Ovary (tissue), 10 donors: ENCODE measurements at regions of chr1 and their contacts with region 1.

Region 1: GRCh38 chr1:16078925-16079656 is 5.6 kb upstream of the FAM131C start:
- DNase-seq: peak; percentile 76 to 89 (median 87)
- H3K4me3 ChIP-seq: no peak overlapping the region
- H3K27ac ChIP-seq: no peak overlapping the region
- H3K4me1 ChIP-seq: peaks cover 1% of the 10 kb centered on the region
- H3K27me3 ChIP-seq: no peaks in the 10 kb centered on the region
- CTCF ChIP-seq: peak; percentile 86 to 98 (median 97)
- EP300 ChIP-seq: no peak
- POLR2A ChIP-seq: peak; percentile 14

Region 2: GRCh38 chr1:15975805-15976680 is 103.0 kb before region 1 on chr1 and contains the start of gene ZBTB17:
- intact Hi-C with region 1: no loop called
- DNase-seq: peak; percentile 93 to 97 (median 94)
- H3K4me3 ChIP-seq: peak within 1 kb of the TSS; percentile 91
- H3K27ac ChIP-seq: peak within 1 kb of the TSS in 1 of 2 donors; percentile 80
- H3K4me1 ChIP-seq: peaks cover 5% of the 10 kb centered on the region
- H3K27me3 ChIP-seq: no peaks in the 10 kb centered on the region
- CTCF ChIP-seq: no peak
- EP300 ChIP-seq: no peak
- POLR2A ChIP-seq: peak; percentile 70
- total RNA-seq, gene ZBTB17: 18.8 to 45.7 (median 29.8) TPM

Region 3: GRCh38 chr1:16026723-16027484 is 52.2 kb before region 1 on chr1:
- intact Hi-C with region 1: no loop called
- DNase-seq: peak; percentile 64 to 75 (median 72)
- H3K4me3 ChIP-seq: peak overlapping the region; percentile 27
- H3K27ac ChIP-seq: peak overlapping the region in 1 of 2 donors; percentile 66
- H3K4me1 ChIP-seq: peaks cover 4% of the 10 kb centered on the region
- H3K27me3 ChIP-seq: no peaks in the 10 kb centered on the region
- CTCF ChIP-seq: no peak
- EP300 ChIP-seq: no peak
- POLR2A ChIP-seq: no peak

Region 4: GRCh38 chr1:16146279-16147155 is 67.4 kb after region 1 on chr1:
- intact Hi-C with region 1: loop called in 1 of 4 experiments (anchors 10 kb)
- DNase-seq: peak; percentile 84 to 89 (median 87)
- H3K4me3 ChIP-seq: peak overlapping the region; percentile 25
- H3K27ac ChIP-seq: peak overlapping the region; percentile 26 to 75
- H3K4me1 ChIP-seq: peaks cover 15% of the 10 kb centered on the region
- H3K27me3 ChIP-seq: no peaks in the 10 kb centered on the region
- CTCF ChIP-seq: no peak
- EP300 ChIP-seq: no peak
- POLR2A ChIP-seq: no peak

Region 5: GRCh38 chr1:16181887-16182719 is 103.0 kb after region 1 on chr1:
- intact Hi-C with region 1: loop called in 1 of 4 experiments (anchors 2 kb)
- DNase-seq: peak; percentile 90 to 95 (median 92)
- H3K4me3 ChIP-seq: no peak overlapping the region
- H3K27ac ChIP-seq: peak overlapping the region; percentile 80 to 96
- H3K4me1 ChIP-seq: peaks cover 14% of the 10 kb centered on the region
- H3K27me3 ChIP-seq: no peaks in the 10 kb centered on the region
- CTCF ChIP-seq: no peak
- EP300 ChIP-seq: peak; percentile 46
- POLR2A ChIP-seq: peak; percentile 21

Region 6: DNA sequence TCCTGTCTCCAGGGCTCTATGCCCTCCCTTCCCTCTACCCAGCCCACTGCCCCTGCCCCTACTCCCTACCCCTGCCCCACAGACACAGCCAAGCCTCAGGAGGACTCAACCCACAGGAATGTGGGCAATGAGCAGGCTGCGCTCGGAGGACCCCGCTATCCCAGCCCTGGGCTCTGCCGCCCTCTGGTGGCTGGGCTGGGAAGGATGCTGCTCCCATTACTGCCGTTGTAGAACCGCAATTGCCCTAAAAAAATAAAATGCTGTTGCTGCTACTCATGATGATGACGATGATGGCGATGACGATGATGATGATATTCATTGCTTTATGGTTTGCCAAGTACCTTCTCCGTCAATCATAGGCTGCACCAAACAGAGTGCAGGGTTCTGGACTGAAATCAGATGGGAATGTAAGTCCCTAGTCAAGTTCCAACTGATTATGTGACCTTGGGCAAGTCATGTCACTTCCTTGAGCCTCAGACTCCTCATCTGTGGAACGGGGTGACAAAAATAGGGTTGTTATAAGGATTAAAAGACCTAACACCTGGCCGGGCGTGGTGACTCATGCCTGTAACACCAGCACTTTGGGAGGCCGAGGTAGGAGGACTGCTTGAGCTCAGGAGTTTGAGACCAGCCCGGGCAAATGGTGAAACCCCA is 108.8 kb after region 1 on chr1:
- intact Hi-C with region 1: loop called (anchors 1 to 2 kb)
- DNase-seq: peak; percentile 80 to 89 (median 84)
- H3K4me3 ChIP-seq: no peak overlapping the region
- H3K27ac ChIP-seq: no peak overlapping the region
- H3K4me1 ChIP-seq: peaks cover 5% of the 10 kb centered on the region
- H3K27me3 ChIP-seq: no peaks in the 10 kb centered on the region
- CTCF ChIP-seq: peak; percentile 90 to 99 (median 98)
- EP300 ChIP-seq: no peak
- POLR2A ChIP-seq: peak; percentile 22

Region 7: GRCh38 chr1:16243936-16244649 is 165.0 kb after region 1 on chr1:
- intact Hi-C with region 1: loop called in 3 of 4 experiments (anchors 2 to 5 kb)
- DNase-seq: peak; percentile 76 to 91 (median 82)
- H3K4me3 ChIP-seq: no peak overlapping the region
- H3K27ac ChIP-seq: peak overlapping the region; percentile 23 to 46
- H3K4me1 ChIP-seq: peaks cover 23% of the 10 kb centered on the region
- H3K27me3 ChIP-seq: no peaks in the 10 kb centered on the region
- CTCF ChIP-seq: peak; percentile 74 to 93 (median 91)
- EP300 ChIP-seq: no peak
- POLR2A ChIP-seq: no peak

Region 8: GRCh38 chr1:16351994-16352841 is 273.1 kb after region 1 on chr1 and contains the start of gene FBXO42:
- intact Hi-C with region 1: loop called in 1 of 4 experiments (anchors 10 kb)
- DNase-seq: peak; percentile 87 to 96 (median 92)
- H3K4me3 ChIP-seq: peak within 1 kb of the TSS; percentile 64
- H3K27ac ChIP-seq: peak within 1 kb of the TSS; percentile 69 to 78
- H3K4me1 ChIP-seq: peaks cover 4% of the 10 kb centered on the region
- H3K27me3 ChIP-seq: no peaks in the 10 kb centered on the region
- CTCF ChIP-seq: peak; percentile 13 to 74 (median 73)
- EP300 ChIP-seq: no peak
- POLR2A ChIP-seq: peak; percentile 97
- total RNA-seq, gene FBXO42: 17.7 to 35.3 (median 23.6) TPM

Region 9: DNA sequence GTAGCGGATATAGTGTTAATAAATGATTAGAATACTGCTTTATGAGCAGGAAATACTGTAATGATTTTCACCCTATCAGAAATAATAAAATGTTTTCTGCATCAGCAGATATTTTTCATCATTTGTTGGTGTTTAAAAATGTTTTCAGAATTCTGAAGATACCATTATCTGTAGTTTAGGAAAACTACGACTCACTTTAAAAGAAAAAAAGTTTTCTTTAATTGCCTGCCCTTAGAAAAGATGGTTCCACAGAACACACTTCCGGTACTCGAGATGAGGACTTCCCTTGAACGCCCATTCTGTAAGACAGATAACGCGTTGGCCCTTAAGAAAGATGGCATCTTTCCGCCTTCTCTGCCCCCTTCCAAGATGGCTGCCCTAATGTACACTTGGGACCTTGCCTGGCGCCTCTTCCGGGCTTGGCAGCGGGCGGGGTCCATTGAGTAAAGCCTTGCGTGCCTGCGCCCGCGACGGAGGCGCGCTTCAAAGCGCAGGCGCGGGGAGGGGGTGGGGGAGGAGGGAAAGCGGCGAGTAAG is 287.7 kb after region 1 on chr1 and contains the start of gene SZRD1:
- intact Hi-C with region 1: loop called in 2 of 4 experiments (anchors 5 kb)
- DNase-seq: peak; percentile 95 to 98 (median 97)
- H3K4me3 ChIP-seq: peak within 1 kb of the TSS; percentile 82
- H3K27ac ChIP-seq: peak within 1 kb of the TSS; percentile 98 to 99
- H3K4me1 ChIP-seq: peaks cover 7% of the 10 kb centered on the region
- H3K27me3 ChIP-seq: no peaks in the 10 kb centered on the region
- CTCF ChIP-seq: no peak
- EP300 ChIP-seq: peak; percentile 13
- POLR2A ChIP-seq: no peak
- total RNA-seq, gene SZRD1: 45.3 to 152 (median 131) TPM